ENCODE measurements at regions of chr20 and their contacts with region 1.

Region 1: GRCh38 chr20:2523919-2524708 is 12.3 kb upstream of the TMC2 start:
- DNase-seq: peak; percentile 91
- H3K4me3 Mint-ChIP-seq: peak overlapping the region; percentile 88
- H3K27ac Mint-ChIP-seq: peak overlapping the region; percentile 71
- H3K4me1 Mint-ChIP-seq: peaks cover 33% of the 10 kb centered on the region
- H3K27me3 Mint-ChIP-seq: peaks cover 3% of the 10 kb centered on the region

Region 2: GRCh38 chr20:2508631-2509467 is 15.3 kb before region 1 on chr20 and contains the start of gene ZNF343:
- CTCF ChIA-PET with region 1: interaction called, 146 read pairs
- POLR2A ChIA-PET with region 1: interaction called, 20 read pairs
- DNase-seq: peak; percentile 83
- H3K4me3 Mint-ChIP-seq: peak within 1 kb of the TSS; percentile 97
- H3K27ac Mint-ChIP-seq: peak within 1 kb of the TSS; percentile 93
- H3K4me1 Mint-ChIP-seq: peaks cover 20% of the 10 kb centered on the region
- H3K27me3 Mint-ChIP-seq: peaks cover 27% of the 10 kb centered on the region
- total RNA-seq, gene ZNF343: 6.2 to 8.8 TPM

Region 3: DNA sequence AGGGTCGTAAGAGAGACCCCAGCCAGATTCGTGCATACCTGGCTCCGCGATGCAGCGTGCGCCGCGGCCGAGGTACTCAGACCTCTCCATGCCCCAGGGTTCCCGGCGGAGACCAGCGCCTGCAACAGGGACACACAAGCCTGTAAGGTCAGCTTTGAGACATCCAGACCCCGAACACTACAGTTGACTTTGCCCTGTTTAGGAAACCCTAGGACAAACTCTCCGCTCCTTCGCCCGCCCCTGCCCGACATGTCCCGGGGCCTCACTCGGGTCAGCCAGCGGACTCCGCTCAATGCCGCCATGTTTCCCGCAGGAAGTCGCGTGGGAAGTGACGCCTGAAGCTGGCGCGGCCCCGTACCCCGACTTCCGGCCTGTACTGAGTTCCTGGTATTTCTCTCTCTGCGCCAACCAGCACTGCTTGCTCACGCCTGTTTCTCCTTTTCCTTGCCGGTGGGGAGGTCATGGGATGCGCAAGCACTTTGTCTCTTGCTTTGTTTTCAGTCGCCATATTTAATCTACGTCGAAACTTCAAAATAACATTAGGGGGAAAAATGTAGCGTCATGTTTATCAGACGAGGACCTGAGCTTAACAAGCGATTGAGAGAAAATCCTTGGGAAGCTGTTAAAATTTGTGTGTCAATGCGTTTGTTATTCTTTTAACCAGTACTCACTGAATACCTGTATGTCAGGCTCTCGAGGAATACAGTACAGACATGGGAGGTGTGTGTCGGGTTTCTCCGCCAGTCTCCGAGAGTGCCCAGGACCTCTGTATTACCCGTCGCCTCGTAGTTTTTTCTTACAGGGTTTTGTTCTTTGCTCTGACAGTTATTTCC is 140.0 kb after region 1 on chr20 and contains the start of gene IDH3B:
- CTCF ChIA-PET with region 1: interaction called, 3 read pairs
- POLR2A ChIA-PET with region 1: interaction called, 10 read pairs
- DNase-seq: peak; percentile 95
- H3K4me3 Mint-ChIP-seq: peak within 1 kb of the TSS; percentile 84
- H3K27ac Mint-ChIP-seq: peak within 1 kb of the TSS; percentile 95
- H3K4me1 Mint-ChIP-seq: peaks cover 34% of the 10 kb centered on the region
- H3K27me3 Mint-ChIP-seq: peaks cover 8% of the 10 kb centered on the region
- total RNA-seq, gene IDH3B: 78.8 to 82.2 TPM

Region 4: GRCh38 chr20:2693286-2694000 is 169.3 kb after region 1 on chr20:
- CTCF ChIA-PET with region 1: no interaction called
- POLR2A ChIA-PET with region 1: no interaction called
- DNase-seq: peak; percentile 39
- H3K4me3 Mint-ChIP-seq: no peak overlapping the region
- H3K27ac Mint-ChIP-seq: no peak overlapping the region
- H3K4me1 Mint-ChIP-seq: peaks cover 15% of the 10 kb centered on the region
- H3K27me3 Mint-ChIP-seq: peaks cover 53% of the 10 kb centered on the region

Measured in activated CD4-positive, alpha-beta memory T cell treated with anti-CD3 and anti-CD28 coated beads, Interleukin-2, amount 10 ng/mL, durations not matched to agents 7 days and 5 days (primary cell).